Activated naive CD4-positive, alpha-beta T cell treated with anti-CD3 and anti-CD28 coated beads for 36 hours (primary cell): ENCODE measurements at regions of chr3 and their contacts with region 1.

Region 1: GRCh38 chr3:111610189-111610588 is 15.0 kb upstream of the ZBED2 start:
- DNase-seq: peak; percentile 71
- H3K4me3 Mint-ChIP-seq: peak overlapping the region; percentile 56
- H3K27ac Mint-ChIP-seq: peak overlapping the region; percentile 97
- H3K4me1 Mint-ChIP-seq: peaks cover 94% of the 10 kb centered on the region
- H3K27me3 Mint-ChIP-seq: no peaks in the 10 kb centered on the region

Region 2: DNA sequence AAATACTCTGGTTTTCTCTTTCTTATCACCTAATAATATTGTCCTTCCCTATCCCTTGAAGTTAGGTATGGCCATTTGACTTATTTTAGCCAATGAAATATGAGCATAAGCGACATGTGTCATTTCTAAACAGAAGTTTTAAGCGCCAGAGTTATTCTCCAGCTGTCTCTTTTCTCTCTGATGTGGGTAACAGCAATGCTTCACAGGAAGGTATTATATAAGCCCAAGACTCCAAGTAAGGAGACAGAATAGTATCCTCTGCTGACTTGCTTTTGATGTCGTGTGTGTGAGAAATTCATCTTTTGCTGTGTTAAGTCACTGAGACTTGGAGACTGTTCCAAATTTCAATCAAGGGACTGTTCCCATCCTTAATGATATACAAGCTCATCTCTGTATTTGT is 763.2 kb before region 1 on chr3:
- CTCF ChIA-PET with region 1: no interaction called
- intact Hi-C with region 1: no loop called
- DNase-seq: no peak
- H3K4me3 Mint-ChIP-seq: no peak overlapping the region
- H3K27ac Mint-ChIP-seq: no peak overlapping the region
- H3K4me1 Mint-ChIP-seq: no peaks in the 10 kb centered on the region
- H3K27me3 Mint-ChIP-seq: peaks cover 8% of the 10 kb centered on the region

Region 3: GRCh38 chr3:111547631-111548030 is 62.6 kb before region 1 on chr3:
- CTCF ChIA-PET with region 1: interaction called, 36 read pairs
- intact Hi-C with region 1: loop called (anchors 1 kb)
- DNase-seq: peak; percentile 74
- H3K4me3 Mint-ChIP-seq: no peak overlapping the region
- H3K27ac Mint-ChIP-seq: no peak overlapping the region
- H3K4me1 Mint-ChIP-seq: peaks cover 39% of the 10 kb centered on the region
- H3K27me3 Mint-ChIP-seq: no peaks in the 10 kb centered on the region

Region 4: DNA sequence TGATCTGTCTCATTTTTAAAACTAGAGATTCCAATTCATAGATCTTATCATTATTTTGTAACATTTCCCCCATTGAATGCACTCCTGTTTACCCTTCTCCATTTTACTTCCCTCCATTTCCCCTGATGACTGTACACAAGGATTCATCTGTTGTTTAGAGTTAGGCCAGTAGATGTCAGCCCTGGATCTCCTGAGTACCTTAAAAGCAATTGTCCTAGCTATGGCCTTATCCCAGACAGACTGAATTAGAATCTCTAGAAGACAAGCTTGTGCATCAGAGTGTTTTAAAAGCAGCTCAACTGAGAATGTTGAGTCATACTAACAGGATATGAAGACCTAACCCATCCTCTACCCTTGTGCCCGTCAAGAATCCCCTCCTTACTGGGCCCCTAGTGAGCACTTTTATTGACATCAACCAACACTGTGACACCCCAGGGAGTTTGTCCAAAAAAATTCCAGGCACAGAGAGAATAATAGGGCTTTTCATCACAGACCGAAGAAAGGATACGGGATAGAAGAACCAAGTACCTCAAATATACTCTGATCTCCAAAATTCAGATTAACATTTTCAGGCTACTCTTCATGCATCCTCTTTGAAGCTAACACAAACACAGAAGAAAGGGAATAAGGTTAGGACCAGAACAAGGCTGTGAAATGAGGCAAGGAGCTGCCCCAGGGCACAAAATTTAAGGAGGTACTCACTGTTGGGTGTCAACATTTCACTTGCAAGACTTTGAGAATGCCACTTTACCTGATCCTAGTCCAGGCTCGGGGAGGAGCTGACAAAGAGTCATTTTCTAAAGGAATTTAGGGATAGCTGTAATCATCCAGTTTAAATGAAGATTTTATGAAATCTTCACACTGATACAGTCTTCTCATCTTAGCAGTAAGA is 32.1 kb before region 1 on chr3:
- CTCF ChIA-PET with region 1: interaction called, 8 read pairs
- intact Hi-C with region 1: loop called (anchors 1 kb)
- DNase-seq: peak; percentile 38
- H3K4me3 Mint-ChIP-seq: peak overlapping the region; percentile 18
- H3K27ac Mint-ChIP-seq: peak overlapping the region; percentile 90
- H3K4me1 Mint-ChIP-seq: peaks cover 75% of the 10 kb centered on the region
- H3K27me3 Mint-ChIP-seq: no peaks in the 10 kb centered on the region

Region 5: GRCh38 chr3:111594205-111594604 is 16.0 kb before region 1 on chr3:
- CTCF ChIA-PET with region 1: interaction called, 88 read pairs
- intact Hi-C with region 1: loop called (anchors 1 kb)
- DNase-seq: no peak
- H3K4me3 Mint-ChIP-seq: peak overlapping the region; percentile 94
- H3K27ac Mint-ChIP-seq: peak overlapping the region; percentile 98
- H3K4me1 Mint-ChIP-seq: peaks cover 52% of the 10 kb centered on the region
- H3K27me3 Mint-ChIP-seq: no peaks in the 10 kb centered on the region

Region 6: DNA sequence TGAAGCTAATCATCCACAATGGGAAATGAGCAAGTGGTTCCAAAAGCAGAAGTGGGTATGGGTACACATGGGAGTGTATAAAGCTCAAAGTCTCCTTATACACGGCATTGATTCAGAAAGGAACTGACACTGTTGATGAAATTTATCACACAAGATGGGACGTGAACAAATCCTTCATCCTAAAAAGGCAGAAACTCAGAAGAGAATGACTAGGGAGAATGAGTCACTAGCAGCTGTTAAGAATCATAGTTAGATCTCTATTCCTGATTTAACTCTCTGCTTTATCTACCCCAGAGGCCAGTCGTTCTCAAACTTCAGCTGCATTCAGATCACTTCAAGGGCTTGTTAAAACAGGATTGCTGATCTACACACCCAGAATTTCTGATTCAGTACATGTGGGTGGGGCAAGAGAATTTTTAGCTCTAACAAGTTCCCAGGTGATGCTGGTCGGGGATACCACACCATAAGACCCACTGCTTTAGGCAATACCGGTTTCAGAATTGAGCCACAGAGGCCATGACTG is 151.2 kb after region 1 on chr3:
- CTCF ChIA-PET with region 1: no interaction called
- intact Hi-C with region 1: loop called (anchors 1 kb)
- DNase-seq: peak; percentile 54
- H3K4me3 Mint-ChIP-seq: no peak overlapping the region
- H3K27ac Mint-ChIP-seq: peak overlapping the region; percentile 68
- H3K4me1 Mint-ChIP-seq: peaks cover 18% of the 10 kb centered on the region
- H3K27me3 Mint-ChIP-seq: no peaks in the 10 kb centered on the region

Region 7: DNA sequence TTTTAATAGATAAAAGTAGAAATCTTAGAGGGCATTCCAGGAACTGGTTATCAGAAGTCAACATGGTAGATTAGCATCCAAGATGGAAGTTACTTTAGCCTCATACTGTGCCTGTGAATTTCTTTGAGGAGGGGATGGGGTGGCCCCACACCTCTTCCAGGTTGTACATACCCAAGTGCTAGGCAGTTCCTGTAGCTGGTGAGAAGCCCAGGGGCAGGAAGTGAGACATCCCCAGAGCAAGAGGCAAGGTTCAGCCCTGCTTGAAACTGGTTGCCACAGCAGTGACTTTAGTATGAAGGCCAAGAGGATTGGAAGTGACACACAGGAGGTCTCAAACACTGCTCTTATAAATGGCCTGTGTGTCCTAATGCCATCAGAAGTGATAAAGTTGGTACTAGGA is 1392.5 kb after region 1 on chr3:
- CTCF ChIA-PET with region 1: no interaction called
- intact Hi-C with region 1: loop called (anchors 5 kb)
- DNase-seq: peak; percentile 90
- H3K4me3 Mint-ChIP-seq: peak overlapping the region; percentile 42
- H3K27ac Mint-ChIP-seq: peak overlapping the region; percentile 95
- H3K4me1 Mint-ChIP-seq: peaks cover 86% of the 10 kb centered on the region
- H3K27me3 Mint-ChIP-seq: no peaks in the 10 kb centered on the region

Region 8: DNA sequence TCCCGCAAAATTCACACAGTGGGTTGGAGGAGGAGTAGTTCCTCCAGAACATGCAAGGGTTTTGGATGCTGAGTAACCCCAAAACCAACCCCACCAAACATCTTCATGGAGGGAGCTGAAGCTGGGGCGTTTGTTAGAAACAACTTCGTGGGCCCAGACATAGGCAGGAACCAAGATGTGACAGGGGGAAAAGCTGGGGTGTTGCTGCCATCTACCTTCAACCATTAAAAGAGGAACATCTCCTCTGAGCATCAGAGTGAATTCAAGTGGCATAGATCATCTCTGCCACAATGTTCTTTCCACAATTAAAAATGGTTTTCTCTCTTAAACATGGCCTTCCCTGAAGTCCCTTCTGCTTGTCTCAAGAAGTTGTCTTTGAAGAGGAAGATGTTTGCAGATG is 1942.7 kb after region 1 on chr3:
- CTCF ChIA-PET with region 1: no interaction called
- intact Hi-C with region 1: no loop called
- DNase-seq: peak; percentile 48
- H3K4me3 Mint-ChIP-seq: no peak overlapping the region
- H3K27ac Mint-ChIP-seq: no peak overlapping the region
- H3K4me1 Mint-ChIP-seq: peaks cover 18% of the 10 kb centered on the region
- H3K27me3 Mint-ChIP-seq: no peaks in the 10 kb centered on the region